ENCODE measurements at regions of chr5 and their contacts with region 1.

Region 1: GRCh38 chr5:80093796-80094195 is 58.6 kb downstream of the THBS4 start:
- DNase-seq: peak in 1 of 6 donors; percentile 16
- ATAC-seq: peak in 3 of 4 donors; percentile 49 to 79 (median 74)
- H3K4me3 ChIP-seq: no peak overlapping the region
- H3K27ac ChIP-seq: peak overlapping the region in 3 of 4 donors; percentile 23 to 55 (median 47)
- H3K4me1 ChIP-seq: no peaks in the 10 kb centered on the region
- H3K27me3 ChIP-seq: no peaks in the 10 kb centered on the region
- CTCF ChIP-seq: no peak

Region 2: GRCh38 chr5:80172067-80172695 is 78.4 kb after region 1 on chr5:
- intact Hi-C with region 1: loop called in 1 of 3 experiments (anchors 10 kb)
- DNase-seq: no peak
- ATAC-seq: no peak
- H3K4me3 ChIP-seq: no peak overlapping the region
- H3K27ac ChIP-seq: no peak overlapping the region
- H3K4me1 ChIP-seq: no peaks in the 10 kb centered on the region
- H3K27me3 ChIP-seq: no peaks in the 10 kb centered on the region
- CTCF ChIP-seq: no peak

Region 3: DNA sequence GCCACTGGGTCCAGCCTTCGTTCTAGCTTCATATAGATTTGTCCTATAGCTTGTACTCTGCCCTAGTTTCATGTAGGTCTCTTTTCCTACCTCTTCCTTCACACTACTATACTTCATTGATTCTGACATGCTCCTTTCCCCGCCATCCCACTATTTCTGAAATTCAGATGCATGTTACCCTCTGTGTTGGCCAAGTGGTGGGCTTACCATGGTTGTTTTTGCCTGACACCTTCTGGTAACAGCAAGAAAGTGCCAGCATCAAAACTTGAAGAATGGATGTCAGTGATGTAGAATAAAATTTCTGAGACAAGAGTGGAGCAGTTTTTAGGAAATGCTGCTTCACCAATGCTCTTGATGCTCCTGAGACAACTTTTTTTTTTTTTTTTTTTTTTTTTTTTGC is 181.6 kb after region 1 on chr5:
- intact Hi-C with region 1: loop called in 1 of 3 experiments (anchors 10 kb)
- DNase-seq: no peak
- ATAC-seq: peak in 2 of 4 donors; percentile 43 to 74
- H3K4me3 ChIP-seq: no peak overlapping the region
- H3K27ac ChIP-seq: no peak overlapping the region
- H3K4me1 ChIP-seq: no peaks in the 10 kb centered on the region
- H3K27me3 ChIP-seq: no peaks in the 10 kb centered on the region
- CTCF ChIP-seq: peak in 1 of 4 donors; percentile 12

Region 4: DNA sequence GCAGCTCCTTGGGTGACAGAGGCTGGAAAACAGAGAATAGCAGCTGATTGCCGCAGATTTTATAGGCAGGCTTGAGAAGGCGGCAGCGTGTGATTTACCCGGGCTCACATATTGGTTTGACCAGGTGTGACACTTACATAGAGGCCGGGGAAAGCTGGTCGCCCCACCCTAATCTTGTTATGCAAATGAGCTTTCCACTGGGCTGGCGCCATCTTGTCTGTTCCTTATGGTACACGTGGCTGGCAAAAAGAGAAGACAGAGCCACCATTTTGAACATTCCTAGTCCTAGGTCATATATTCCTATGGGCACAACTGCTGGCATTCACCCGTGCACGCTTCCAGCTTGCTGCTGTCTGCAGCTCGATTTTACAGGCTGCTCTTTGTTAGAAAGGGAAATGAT is 214.7 kb after region 1 on chr5:
- intact Hi-C with region 1: loop called in 2 of 3 experiments (anchors 5 kb)
- DNase-seq: no peak
- ATAC-seq: no peak
- H3K4me3 ChIP-seq: no peak overlapping the region
- H3K27ac ChIP-seq: no peak overlapping the region
- H3K4me1 ChIP-seq: no peaks in the 10 kb centered on the region
- H3K27me3 ChIP-seq: no peaks in the 10 kb centered on the region
- CTCF ChIP-seq: no peak